ENCODE measurements at regions of chr4 and their contacts with region 1.

Region 1: GRCh38 chr4:126733301-126733700 is 899.5 kb upstream of the INTU start:
- DNase-seq: peak in 1 of 4 experiments; percentile 47
- ATAC-seq: peak; percentile 59
- H3K4me3 ChIP-seq: peak overlapping the region; percentile 48
- H3K27ac ChIP-seq: peak overlapping the region; percentile 78
- H3K4me1 ChIP-seq: peaks cover 0 to 13% of the 10 kb centered on the region in 2 experiments; a peak in 4 of 5 replicates
- H3K27me3 ChIP-seq: no peaks in the 10 kb centered on the region
- CTCF ChIP-seq: no peak
- EP300 ChIP-seq: peak; percentile 9; the same call in 1 of the 2 replicates
- POLR2A ChIP-seq: no peak
- RAD21 ChIP-seq: no peak

Region 2: DNA sequence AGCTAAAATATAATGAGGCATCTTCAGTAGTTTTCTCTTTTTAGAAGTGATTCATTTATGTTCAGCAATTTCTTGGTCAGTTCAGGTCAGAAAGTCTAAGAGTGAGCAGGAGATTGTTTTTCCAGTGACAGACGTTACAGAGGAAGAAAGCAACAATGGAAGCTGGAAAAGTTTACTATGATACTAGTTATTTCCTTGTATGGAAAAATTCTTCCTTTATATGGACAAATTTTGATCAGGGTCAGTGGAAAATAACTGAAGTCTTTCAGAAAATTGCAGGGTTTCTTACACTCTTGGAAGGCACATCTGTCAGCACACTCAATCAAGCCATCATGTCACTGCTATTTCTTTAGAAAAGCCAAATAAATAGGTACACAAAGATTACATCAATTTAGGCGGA is 297.8 kb before region 1 on chr4:
- CTCF ChIA-PET with region 1: no interaction called
- POLR2A ChIA-PET with region 1: no interaction called
- in situ Hi-C with region 1: no loop called
- intact Hi-C with region 1: no loop called
- DNase-seq: no peak
- ATAC-seq: no peak
- H3K4me3 ChIP-seq: no peak overlapping the region
- H3K27ac ChIP-seq: no peak overlapping the region
- H3K4me1 ChIP-seq: no peaks in the 10 kb centered on the region
- H3K27me3 ChIP-seq: no peaks in the 10 kb centered on the region
- CTCF ChIP-seq: no peak
- EP300 ChIP-seq: no peak
- POLR2A ChIP-seq: no peak
- RAD21 ChIP-seq: no peak

Region 3: GRCh38 chr4:126687655-126688358 is 45.5 kb before region 1 on chr4:
- CTCF ChIA-PET with region 1: no interaction called
- POLR2A ChIA-PET with region 1: no interaction called
- in situ Hi-C with region 1: no loop called
- intact Hi-C with region 1: no loop called
- DNase-seq: no peak
- ATAC-seq: no peak
- H3K4me3 ChIP-seq: no peak overlapping the region
- H3K27ac ChIP-seq: no peak overlapping the region
- H3K4me1 ChIP-seq: no peaks in the 10 kb centered on the region
- H3K27me3 ChIP-seq: no peaks in the 10 kb centered on the region
- CTCF ChIP-seq: no peak
- EP300 ChIP-seq: no peak
- POLR2A ChIP-seq: no peak
- RAD21 ChIP-seq: no peak

Region 4: DNA sequence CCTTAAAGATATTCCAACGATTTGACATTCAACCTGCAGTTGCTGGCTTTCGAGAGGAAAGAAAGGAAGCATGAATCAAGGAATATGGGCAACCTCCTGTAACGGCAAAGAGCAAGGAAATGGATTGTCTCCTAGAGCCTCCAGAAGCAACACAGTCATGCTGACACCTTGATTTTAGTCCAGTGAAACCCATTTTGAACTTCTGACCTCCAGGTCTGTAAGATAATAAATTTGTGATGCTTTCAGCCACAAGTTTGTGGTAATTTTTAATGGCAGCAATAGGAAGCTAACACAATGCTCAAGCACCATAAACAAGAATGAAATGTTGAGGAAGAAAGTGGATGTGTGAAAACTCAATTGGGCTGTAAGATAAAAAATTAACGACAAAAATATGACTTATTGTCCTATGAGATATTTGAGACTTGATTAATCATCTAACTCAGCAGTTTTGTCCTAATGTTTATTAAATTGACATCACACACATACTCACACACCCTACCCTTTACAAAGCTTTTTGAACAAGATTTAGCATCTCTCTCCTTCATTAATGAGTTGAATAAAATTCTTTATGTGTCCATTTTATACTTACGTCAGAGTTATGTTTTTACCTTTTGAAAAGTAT is 42.3 kb after region 1 on chr4:
- CTCF ChIA-PET with region 1: no interaction called
- POLR2A ChIA-PET with region 1: no interaction called
- in situ Hi-C with region 1: no loop called
- intact Hi-C with region 1: loop called (anchors 1 kb)
- DNase-seq: peak in 1 of 4 experiments; percentile 77
- ATAC-seq: peak; percentile 53
- H3K4me3 ChIP-seq: peak overlapping the region; percentile 32
- H3K27ac ChIP-seq: peak overlapping the region; percentile 90
- H3K4me1 ChIP-seq: peaks cover 7 to 14% of the 10 kb centered on the region in 2 experiments
- H3K27me3 ChIP-seq: no peaks in the 10 kb centered on the region
- CTCF ChIP-seq: no peak
- EP300 ChIP-seq: peak; percentile 73; the same call in 1 of the 2 replicates
- POLR2A ChIP-seq: no peak; the same call in 1 of the 2 replicates
- RAD21 ChIP-seq: no peak

Region 5: DNA sequence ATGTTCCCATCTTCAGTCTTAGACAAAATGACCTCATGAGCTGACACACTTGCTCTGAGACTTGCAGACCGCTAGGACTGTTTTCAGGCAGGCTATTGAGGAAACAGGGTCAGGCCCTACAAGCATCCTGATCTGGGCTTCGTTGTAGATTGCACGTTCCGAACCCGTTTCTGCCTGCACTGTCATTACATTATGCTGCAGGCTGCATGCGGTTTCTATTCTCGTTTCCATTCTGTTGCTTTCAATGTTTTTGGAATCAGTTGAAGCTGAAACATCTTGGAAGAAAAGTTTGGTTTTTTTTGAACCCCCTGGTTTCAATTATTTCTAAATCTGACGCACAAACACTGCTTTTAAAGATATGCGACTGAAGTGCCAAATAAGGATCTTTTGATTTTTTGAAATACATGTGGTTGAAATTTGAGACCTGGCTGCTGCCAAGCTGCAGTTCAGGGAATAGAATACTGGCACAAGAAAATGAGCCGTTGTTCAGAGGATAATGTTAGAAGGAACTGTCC is 183.4 kb after region 1 on chr4:
- CTCF ChIA-PET with region 1: no interaction called
- POLR2A ChIA-PET with region 1: interaction called, 3 read pairs
- in situ Hi-C with region 1: no loop called
- intact Hi-C with region 1: loop called (anchors 2 kb)
- DNase-seq: peak in 3 of 4 experiments; percentile 20 to 83 (median 47)
- ATAC-seq: peak; percentile 96
- H3K4me3 ChIP-seq: no peak overlapping the region
- H3K27ac ChIP-seq: peak overlapping the region; percentile 66
- H3K4me1 ChIP-seq: peaks cover 0 to 11% of the 10 kb centered on the region in 2 experiments; a peak in 1 of 5 replicates
- H3K27me3 ChIP-seq: no peaks in the 10 kb centered on the region
- CTCF ChIP-seq: no peak
- EP300 ChIP-seq: no peak; the same call in 1 of the 2 replicates
- POLR2A ChIP-seq: no peak
- RAD21 ChIP-seq: no peak

Region 6: GRCh38 chr4:127000110-127000509 is 266.8 kb after region 1 on chr4:
- CTCF ChIA-PET with region 1: no interaction called
- POLR2A ChIA-PET with region 1: no interaction called
- in situ Hi-C with region 1: no loop called
- intact Hi-C with region 1: no loop called
- DNase-seq: no peak
- ATAC-seq: no peak
- H3K4me3 ChIP-seq: no peak overlapping the region
- H3K27ac ChIP-seq: no peak overlapping the region
- H3K4me1 ChIP-seq: no peaks in the 10 kb centered on the region
- H3K27me3 ChIP-seq: no peaks in the 10 kb centered on the region
- CTCF ChIP-seq: no peak
- EP300 ChIP-seq: no peak
- POLR2A ChIP-seq: no peak
- RAD21 ChIP-seq: no peak